ENCODE measurements at regions of chr6 and their contacts with region 1.

Region 1: DNA sequence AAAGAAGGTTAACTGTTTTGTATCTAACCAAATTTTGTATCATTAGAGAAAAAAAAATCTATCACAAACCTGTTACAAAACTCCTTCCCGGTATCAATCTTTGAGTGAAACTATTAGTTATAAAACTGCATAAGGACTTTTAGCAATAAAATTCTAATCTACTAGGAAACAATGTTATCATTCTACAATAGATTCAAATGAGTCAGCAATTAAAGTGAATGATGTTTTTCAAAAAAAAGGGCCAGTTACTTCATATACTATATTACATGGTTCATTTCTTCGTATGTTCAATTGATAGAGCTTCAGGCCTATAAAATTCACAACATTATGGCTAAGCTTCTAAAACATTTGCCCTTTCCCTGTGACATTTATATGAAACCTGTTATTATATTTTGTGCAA is 15.6 kb downstream of the ASCC3 start:
- DNase-seq: no peak
- ATAC-seq: no peak
- H3K4me3 Mint-ChIP-seq: no peak overlapping the region
- H3K27ac Mint-ChIP-seq: no peak overlapping the region
- H3K4me1 Mint-ChIP-seq: peaks cover 3% of the 10 kb centered on the region
- H3K27me3 Mint-ChIP-seq: no peaks in the 10 kb centered on the region

Region 2: GRCh38 chr6:100818066-100818465 is 47.5 kb before region 1 on chr6:
- CTCF ChIA-PET with region 1: no interaction called
- POLR2A ChIA-PET with region 1: no interaction called
- intact Hi-C with region 1: no loop called
- DNase-seq: no peak
- ATAC-seq: no peak
- H3K4me3 Mint-ChIP-seq: no peak overlapping the region
- H3K27ac Mint-ChIP-seq: no peak overlapping the region
- H3K4me1 Mint-ChIP-seq: peaks cover 19% of the 10 kb centered on the region
- H3K27me3 Mint-ChIP-seq: no peaks in the 10 kb centered on the region

Region 3: DNA sequence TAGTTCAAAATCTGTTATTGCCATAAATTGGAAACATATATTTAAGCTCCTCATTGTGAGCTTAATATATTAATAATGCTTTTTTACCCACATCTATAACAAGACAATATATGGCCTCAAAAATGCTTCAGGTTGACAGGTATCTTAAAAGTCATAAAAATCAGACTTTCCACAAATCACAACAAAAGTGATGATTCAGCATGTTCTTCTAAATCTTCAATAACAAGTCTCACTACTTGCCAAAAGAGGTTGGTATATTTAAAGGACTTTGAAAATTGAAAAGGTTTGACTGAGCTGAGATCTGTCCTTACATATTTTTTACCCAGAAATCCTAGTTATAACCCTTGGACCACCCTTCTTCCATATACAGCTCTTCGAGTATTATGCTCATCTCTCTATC is 26.1 kb before region 1 on chr6:
- CTCF ChIA-PET with region 1: no interaction called
- POLR2A ChIA-PET with region 1: no interaction called
- intact Hi-C with region 1: no loop called
- DNase-seq: no peak
- ATAC-seq: no peak
- H3K4me3 Mint-ChIP-seq: no peak overlapping the region
- H3K27ac Mint-ChIP-seq: no peak overlapping the region
- H3K4me1 Mint-ChIP-seq: peaks cover 20% of the 10 kb centered on the region
- H3K27me3 Mint-ChIP-seq: no peaks in the 10 kb centered on the region

Region 4: GRCh38 chr6:100880853-100881706 is 15.6 kb after region 1 on chr6 and contains the start of gene ASCC3:
- CTCF ChIA-PET with region 1: interaction called, 10 read pairs
- POLR2A ChIA-PET with region 1: no interaction called
- intact Hi-C with region 1: no loop called
- DNase-seq: peak; percentile 96
- ATAC-seq: peak; percentile 97
- H3K4me3 Mint-ChIP-seq: peak within 1 kb of the TSS; percentile 99
- H3K27ac Mint-ChIP-seq: peak within 1 kb of the TSS; percentile 100
- H3K4me1 Mint-ChIP-seq: peaks cover 38% of the 10 kb centered on the region
- H3K27me3 Mint-ChIP-seq: peaks cover 1% of the 10 kb centered on the region
- total RNA-seq, gene ASCC3: 50.3 to 53.4 TPM

Region 5: GRCh38 chr6:100924571-100924970 is 59.0 kb after region 1 on chr6:
- CTCF ChIA-PET with region 1: no interaction called
- POLR2A ChIA-PET with region 1: no interaction called
- intact Hi-C with region 1: no loop called
- DNase-seq: no peak
- ATAC-seq: no peak
- H3K4me3 Mint-ChIP-seq: no peak overlapping the region
- H3K27ac Mint-ChIP-seq: no peak overlapping the region
- H3K4me1 Mint-ChIP-seq: no peaks in the 10 kb centered on the region
- H3K27me3 Mint-ChIP-seq: peaks cover 11% of the 10 kb centered on the region